Colonic mucosa (tissue), 4 donors: ENCODE measurements at regions of chr1 and their contacts with region 1.

Region 1: DNA sequence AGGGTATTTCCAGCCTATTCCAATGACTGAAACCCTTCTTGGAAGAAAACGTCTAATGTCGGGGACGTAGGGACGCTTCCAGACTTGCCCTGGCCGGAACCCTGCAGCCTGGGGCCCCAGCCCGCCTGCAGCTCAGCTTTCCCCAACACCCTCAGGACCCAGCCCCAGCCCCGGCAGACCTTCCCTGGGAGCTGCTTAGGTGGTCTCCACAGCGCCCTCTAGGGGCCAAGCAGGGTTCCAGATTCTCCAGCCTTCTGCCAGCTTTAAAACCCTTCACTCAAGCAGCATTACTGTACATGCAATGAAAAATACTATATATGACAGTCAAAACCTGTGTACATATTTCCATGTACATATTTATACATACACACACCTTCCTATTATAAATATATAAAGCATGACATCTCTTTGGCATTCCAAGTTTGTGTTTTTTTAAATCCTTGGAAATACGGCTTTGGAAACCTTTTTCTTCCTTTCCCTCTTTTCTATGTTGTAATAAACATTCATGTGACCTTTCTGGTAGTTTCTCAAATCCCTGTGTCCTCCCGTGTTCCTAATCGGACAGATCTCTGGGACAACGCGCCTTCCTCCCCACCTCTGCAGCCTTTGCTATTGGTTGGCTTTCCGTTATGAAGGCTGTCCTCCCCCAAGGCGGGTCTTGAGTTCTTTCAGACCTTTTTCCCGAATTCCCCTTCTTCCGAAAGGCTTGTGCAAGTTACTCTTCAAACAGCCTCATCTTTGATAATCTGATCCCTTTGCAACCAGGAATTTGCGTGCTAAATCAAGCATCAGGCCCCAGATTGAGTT is 60.3 kb downstream of the STUM start:
- DNase-seq: peak; percentile 59
- H3K4me3 ChIP-seq: no peak overlapping the region
- H3K27ac ChIP-seq: no peak overlapping the region
- H3K4me1 ChIP-seq: no peaks in the 10 kb centered on the region
- H3K27me3 ChIP-seq: no peaks in the 10 kb centered on the region
- CTCF ChIP-seq: peak; percentile 82

Region 2: DNA sequence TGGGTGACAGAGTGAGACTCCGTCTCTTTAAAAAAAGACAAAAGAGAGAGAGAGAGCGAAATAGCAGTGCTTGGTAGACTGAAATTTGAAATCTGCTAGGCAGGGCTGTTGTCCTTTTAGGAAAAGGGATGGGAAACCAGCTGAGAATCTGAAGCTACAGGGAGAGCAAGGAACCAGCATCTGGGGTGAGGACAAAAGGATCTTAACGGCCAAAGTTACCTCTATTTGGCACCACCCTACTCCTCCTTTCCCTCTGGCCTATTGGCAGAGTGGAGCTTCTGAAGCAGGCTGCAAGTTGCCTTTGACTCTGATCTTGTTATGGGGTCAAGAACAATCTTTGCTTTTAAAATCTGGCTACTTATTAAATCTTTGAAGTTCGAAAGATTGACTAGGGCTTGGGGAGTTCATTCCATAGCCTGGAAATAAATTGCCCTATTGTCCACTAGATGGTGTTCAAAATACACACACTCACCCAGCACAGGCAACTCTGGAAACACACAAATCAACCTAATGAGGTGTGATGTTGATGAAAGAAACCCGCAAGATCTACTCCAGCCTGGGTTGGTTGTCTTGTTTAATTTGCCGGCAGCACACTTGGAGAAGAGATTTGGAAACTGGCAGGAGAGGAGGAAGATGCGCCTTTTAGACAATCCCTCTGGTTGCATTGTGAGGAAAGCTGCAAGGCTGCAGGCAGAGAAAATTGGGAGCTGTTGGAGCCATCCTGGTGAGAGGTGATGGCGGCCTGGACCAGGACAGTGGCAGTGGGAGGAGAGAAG is 184.5 kb before region 1 on chr1:
- intact Hi-C with region 1: loop called (anchors 5 kb)
- DNase-seq: no peak
- H3K4me3 ChIP-seq: no peak overlapping the region
- H3K27ac ChIP-seq: no peak overlapping the region
- H3K4me1 ChIP-seq: no peaks in the 10 kb centered on the region
- H3K27me3 ChIP-seq: no peaks in the 10 kb centered on the region
- CTCF ChIP-seq: peak; percentile 59